HEK293T (cell line): ENCODE measurements at regions of chr14 and their contacts with region 1.

Region 1: GRCh38 chr14:105168979-105169507 is 467 bp upstream of the JAG2 start:
- DNase-seq: peak; percentile 71

Region 2: GRCh38 chr14:105180592-105181548 is 11.8 kb after region 1 on chr14 and contains the start of gene NUDT14:
- CTCF ChIA-PET with region 1: interaction called, 10 read pairs
- POLR2A ChIA-PET with region 1: interaction called, 21 read pairs
- DNase-seq: peak; percentile 92

Region 3: DNA sequence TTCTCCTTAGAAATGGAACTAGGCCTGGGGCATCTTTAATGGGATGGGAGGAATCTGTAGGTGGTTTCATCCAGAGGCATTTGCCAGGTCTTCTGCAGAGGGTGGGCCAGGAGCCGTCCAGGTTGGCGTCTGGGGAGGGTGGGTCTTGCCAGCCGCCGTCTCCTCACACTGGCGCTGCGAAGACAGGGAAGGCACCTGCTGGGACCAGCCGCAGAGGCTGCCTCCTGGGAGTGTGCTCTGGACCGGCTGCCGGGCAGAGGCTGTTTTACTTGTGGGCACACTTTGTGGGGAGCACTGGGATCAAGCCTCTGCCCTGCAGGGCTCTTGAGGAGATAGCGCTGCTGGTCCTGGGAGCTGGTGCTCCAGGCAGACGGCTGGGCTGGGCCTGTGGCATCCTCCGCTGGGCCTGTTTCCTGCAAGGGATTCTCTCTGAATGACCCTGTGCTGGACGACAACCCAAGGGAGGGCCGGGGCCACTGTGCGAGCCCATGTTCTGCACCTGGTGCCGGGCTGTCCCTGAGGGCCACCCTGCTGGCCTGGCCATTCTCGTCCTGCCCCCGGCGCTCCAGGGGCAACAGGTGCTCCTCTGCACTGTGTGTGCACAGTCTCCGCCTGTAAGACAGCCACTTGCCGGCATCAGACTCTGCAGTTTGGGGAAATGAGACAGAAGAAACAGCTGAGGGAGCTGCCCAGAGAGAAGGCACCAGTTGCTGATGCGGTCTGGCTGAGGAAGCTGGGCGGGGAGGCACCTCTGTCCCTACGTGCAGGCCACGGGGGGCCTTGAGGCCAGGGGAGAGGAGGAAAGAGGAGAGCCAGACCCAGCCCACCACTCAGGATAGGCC is 219.3 kb after region 1 on chr14:
- CTCF ChIA-PET with region 1: no interaction called
- POLR2A ChIA-PET with region 1: no interaction called
- DNase-seq: no peak